T-cell (primary cell): ENCODE measurements at regions of chr6 and their contacts with region 1.

Region 1: DNA sequence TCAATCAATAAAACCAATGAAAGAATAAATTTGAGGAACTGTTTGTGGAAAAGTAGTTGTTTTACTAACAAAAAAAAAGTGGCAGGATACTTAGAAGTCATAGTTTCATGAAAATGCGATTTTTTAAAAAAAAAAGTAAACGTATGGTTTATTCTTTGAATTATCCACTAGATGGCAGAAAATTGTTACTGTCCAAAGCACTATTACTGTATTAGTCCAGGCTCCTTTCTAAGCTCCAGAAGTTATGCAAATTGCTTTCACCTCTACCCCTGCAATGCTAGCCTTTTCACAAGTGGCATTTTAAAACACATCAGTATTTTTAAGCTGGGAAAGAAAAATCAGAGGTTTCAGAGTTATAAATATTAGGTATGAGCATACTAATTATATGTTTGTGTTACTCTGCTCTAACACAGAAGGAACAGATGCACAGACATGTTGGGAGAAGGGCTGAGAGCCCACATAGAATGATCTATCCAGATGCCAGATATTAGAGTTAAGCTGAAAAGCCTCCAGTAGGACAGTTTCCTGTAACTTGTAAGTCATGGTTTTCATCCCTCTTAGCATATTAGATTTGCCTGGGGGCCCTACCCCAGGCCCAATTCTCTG is 63.9 kb downstream of the FHL5 start:
- DNase-seq: peak in 1 of 35 experiments; percentile 34
- ATAC-seq: no peak
- H3K4me3 ChIP-seq: no peak overlapping the region
- H3K4me3 Mint-ChIP-seq: no peak overlapping the region
- H3K27ac ChIP-seq: no peak overlapping the region
- H3K27ac Mint-ChIP-seq: no peak overlapping the region
- H3K4me1 ChIP-seq: no peaks in the 10 kb centered on the region
- H3K4me1 Mint-ChIP-seq: no peaks in the 10 kb centered on the region
- H3K27me3 ChIP-seq: peaks cover 3% of the 10 kb centered on the region in 2 experiments
- H3K27me3 Mint-ChIP-seq: peaks cover 3 to 24% of the 10 kb centered on the region in 2 donors

Region 2: DNA sequence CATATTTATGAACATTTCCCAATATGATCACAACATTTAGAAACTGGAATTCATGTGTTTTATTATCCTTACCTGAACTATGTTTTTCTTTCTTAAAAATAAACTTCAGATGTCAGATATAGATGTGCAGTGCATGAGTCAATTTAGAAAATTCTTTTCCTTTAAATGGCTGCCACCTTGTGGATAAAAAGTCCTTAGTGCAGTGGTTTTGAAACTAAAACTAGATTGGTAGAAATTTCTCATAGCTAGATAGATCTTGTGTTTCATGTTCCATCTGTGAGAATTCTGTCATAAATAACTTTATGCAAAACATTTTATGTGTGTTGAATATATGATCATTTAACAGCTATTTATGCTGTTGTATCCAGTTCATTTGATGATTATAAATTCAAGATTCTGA is 432.6 kb after region 1 on chr6:
- CTCF ChIA-PET with region 1: interaction called, 9 to 37 read pairs
- POLR2A ChIA-PET with region 1: no interaction called
- DNase-seq: peak in 1 of 35 experiments; percentile 54
- ATAC-seq: peak in 1 of 4 experiments; percentile 49
- H3K4me3 ChIP-seq: no peak overlapping the region
- H3K4me3 Mint-ChIP-seq: no peak overlapping the region
- H3K27ac ChIP-seq: no peak overlapping the region
- H3K27ac Mint-ChIP-seq: no peak overlapping the region
- H3K4me1 ChIP-seq: no peaks in the 10 kb centered on the region
- H3K4me1 Mint-ChIP-seq: no peaks in the 10 kb centered on the region
- H3K27me3 ChIP-seq: no peaks in the 10 kb centered on the region
- H3K27me3 Mint-ChIP-seq: peaks cover 0 to 1% of the 10 kb centered on the region in 2 donors